Activated CD4-positive, alpha-beta memory T cell treated with anti-CD3 and anti-CD28 coated beads for 36 hours (primary cell): ENCODE measurements at regions of chr15 and their contacts with region 1.

Region 1: DNA sequence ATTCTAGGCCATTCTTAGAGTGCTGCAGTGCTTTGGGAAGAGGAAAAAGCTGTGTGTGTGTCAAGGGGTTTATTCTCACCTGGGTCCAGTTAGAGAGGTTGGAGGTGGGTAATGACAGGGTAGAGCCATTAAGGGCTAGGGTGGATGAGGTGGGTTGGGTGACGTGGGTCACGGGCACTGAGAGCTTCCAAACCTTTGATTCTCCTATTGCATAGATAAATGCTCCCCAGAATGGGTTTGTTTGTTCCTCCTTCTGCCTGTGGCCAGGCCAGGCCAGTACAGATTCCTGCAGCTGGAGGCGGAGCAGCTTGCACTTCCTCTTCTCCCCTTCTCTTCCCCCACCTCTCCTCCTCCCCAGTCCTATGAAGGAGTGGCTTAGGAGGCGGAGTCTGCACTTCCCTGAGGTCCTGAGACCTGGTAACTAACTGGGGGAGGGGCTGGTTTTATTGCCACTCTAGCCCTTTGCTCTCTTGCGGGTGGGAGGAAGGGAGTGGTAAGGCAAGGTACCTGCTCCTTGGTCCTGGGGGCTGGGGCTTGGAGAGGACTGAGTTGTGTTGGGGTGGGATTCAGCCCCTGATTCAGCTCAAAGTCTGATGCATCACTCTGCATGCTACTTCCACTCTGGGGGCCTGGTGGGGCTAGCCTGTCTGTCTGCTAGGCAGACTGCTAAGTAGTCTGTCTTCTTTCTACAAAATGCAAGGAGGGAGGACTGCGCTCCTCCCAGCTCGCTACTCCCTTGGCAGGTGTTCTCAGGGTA is 3.5 kb downstream of the SPINT1 start:
- DNase-seq: no peak
- H3K4me3 Mint-ChIP-seq: no peak overlapping the region
- H3K27ac Mint-ChIP-seq: no peak overlapping the region
- H3K4me1 Mint-ChIP-seq: peaks cover 27% of the 10 kb centered on the region
- H3K27me3 Mint-ChIP-seq: peaks cover 6% of the 10 kb centered on the region

Region 2: GRCh38 chr15:40763801-40764732 is 83.3 kb before region 1 on chr15 and contains the start of gene GCHFR:
- CTCF ChIA-PET with region 1: no interaction called
- POLR2A ChIA-PET with region 1: no interaction called
- intact Hi-C with region 1: loop called (anchors 10 kb)
- DNase-seq: peak; percentile 82
- H3K4me3 Mint-ChIP-seq: peak within 1 kb of the TSS; percentile 63
- H3K27ac Mint-ChIP-seq: peak within 1 kb of the TSS; percentile 79
- H3K4me1 Mint-ChIP-seq: peaks cover 31% of the 10 kb centered on the region
- H3K27me3 Mint-ChIP-seq: no peaks in the 10 kb centered on the region
- total RNA-seq, gene GCHFR: 36.0 to 40.2 TPM

Region 3: DNA sequence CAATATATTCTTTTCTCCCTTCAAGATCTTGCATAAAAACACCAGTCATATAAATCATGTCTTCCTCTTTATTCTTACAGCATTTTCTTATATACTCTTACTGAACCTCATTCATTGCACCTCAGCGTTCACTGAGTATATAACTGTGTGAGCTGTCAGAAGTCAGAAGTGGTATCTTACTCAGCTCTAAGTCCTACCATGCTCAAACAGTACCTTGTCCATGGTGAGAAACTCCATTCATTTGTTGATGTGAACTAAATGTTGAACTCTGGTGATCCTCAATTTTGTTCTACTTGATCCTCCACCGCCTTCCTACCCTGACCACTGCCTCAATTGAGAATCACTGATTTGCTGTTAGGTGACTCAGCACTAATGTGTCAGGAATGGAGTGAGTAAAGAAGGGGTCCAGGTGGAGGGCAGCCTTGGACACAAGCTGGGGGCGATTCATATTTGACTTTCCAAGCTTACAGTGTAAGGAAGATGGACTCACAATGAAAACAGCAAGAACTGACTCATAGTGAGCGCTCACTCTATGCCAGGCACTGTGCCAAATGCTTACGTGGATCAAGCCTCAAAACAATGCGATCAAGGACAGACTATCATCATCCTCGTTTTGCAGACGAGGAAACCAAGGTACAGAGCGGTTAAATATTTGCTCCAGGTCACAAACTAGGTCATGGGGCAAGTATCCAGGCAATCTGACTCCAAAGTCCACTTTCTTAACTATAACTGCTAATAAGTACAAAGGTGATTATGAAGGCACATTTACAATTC is 54.0 kb before region 1 on chr15:
- CTCF ChIA-PET with region 1: no interaction called
- POLR2A ChIA-PET with region 1: no interaction called
- intact Hi-C with region 1: no loop called
- DNase-seq: peak; percentile 79
- H3K4me3 Mint-ChIP-seq: no peak overlapping the region
- H3K27ac Mint-ChIP-seq: no peak overlapping the region
- H3K4me1 Mint-ChIP-seq: peaks cover 30% of the 10 kb centered on the region
- H3K27me3 Mint-ChIP-seq: no peaks in the 10 kb centered on the region